ENCODE measurements at regions of chr3 and their contacts with region 1.

Region 1: GRCh38 chr3:128607710-128608048 is 42.9 kb downstream of the RPN1 start:
- DNase-seq: no peak
- H3K4me3 ChIP-seq: peak overlapping the region in 1 of 3 donors; percentile 72
- H3K27ac ChIP-seq: peak overlapping the region; percentile 82 to 93
- H3K4me1 ChIP-seq: peaks cover 0 to 10% (median 0%) of the 10 kb centered on the region in 3 donors
- H3K27me3 ChIP-seq: no peaks in the 10 kb centered on the region
- CTCF ChIP-seq: no peak

Region 2: GRCh38 chr3:127915115-127915936 is 692.4 kb before region 1 on chr3 and contains the start of gene KBTBD12:
- intact Hi-C with region 1: no loop called
- DNase-seq: peak; percentile 70 to 84 (median 80)
- H3K4me3 ChIP-seq: peak within 1 kb of the TSS; percentile 9 to 59 (median 47)
- H3K27ac ChIP-seq: peak within 1 kb of the TSS in 1 of 2 donors; percentile 32
- H3K4me1 ChIP-seq: peaks cover 0 to 7% (median 4%) of the 10 kb centered on the region in 3 donors
- H3K27me3 ChIP-seq: no peaks in the 10 kb centered on the region
- CTCF ChIP-seq: no peak
- total RNA-seq, gene KBTBD12: 1.4 TPM

Region 3: GRCh38 chr3:128426128-128426921 is 181.4 kb before region 1 on chr3:
- intact Hi-C with region 1: loop called (anchors 5 kb)
- DNase-seq: peak; percentile 61 to 82 (median 68)
- H3K4me3 ChIP-seq: peak overlapping the region in 1 of 3 donors; percentile 32
- H3K27ac ChIP-seq: no peak overlapping the region
- H3K4me1 ChIP-seq: peaks cover 0 to 13% (median 0%) of the 10 kb centered on the region in 3 donors
- H3K27me3 ChIP-seq: no peaks in the 10 kb centered on the region
- CTCF ChIP-seq: peak; percentile 95

Region 4: GRCh38 chr3:128456776-128457715 is 150.6 kb before region 1 on chr3:
- intact Hi-C with region 1: no loop called
- DNase-seq: peak; percentile 47 to 85 (median 59)
- H3K4me3 ChIP-seq: no peak overlapping the region
- H3K27ac ChIP-seq: no peak overlapping the region
- H3K4me1 ChIP-seq: peaks cover 0 to 2% (median 0%) of the 10 kb centered on the region in 3 donors
- H3K27me3 ChIP-seq: no peaks in the 10 kb centered on the region
- CTCF ChIP-seq: no peak

Region 5: GRCh38 chr3:129016356-129016719 is 408.7 kb after region 1 on chr3:
- intact Hi-C with region 1: no loop called
- DNase-seq: peak in 4 of 5 donors; percentile 41 to 78 (median 68)
- H3K4me3 ChIP-seq: no peak overlapping the region
- H3K27ac ChIP-seq: peak overlapping the region; percentile 65 to 81
- H3K4me1 ChIP-seq: peaks cover 0 to 7% (median 5%) of the 10 kb centered on the region in 3 donors
- H3K27me3 ChIP-seq: no peaks in the 10 kb centered on the region
- CTCF ChIP-seq: no peak

Measured in kidney (tissue), 22 donors.